ENCODE measurements at regions of chr6 and their contacts with region 1.

Region 1: GRCh38 chr6:159217595-159218275 is 48.5 kb downstream of the FNDC1 start:
- DNase-seq: peak; percentile 93
- H3K4me3 ChIP-seq: peak overlapping the region; percentile 60
- H3K27ac ChIP-seq: peak overlapping the region; percentile 87
- H3K4me1 ChIP-seq: peaks cover 77% of the 10 kb centered on the region
- CTCF ChIP-seq: peak; percentile 90

Region 2: GRCh38 chr6:158999666-159000403 is 217.9 kb before region 1 on chr6 and contains the start of gene RSPH3:
- CTCF ChIA-PET with region 1: no interaction called
- POLR2A ChIA-PET with region 1: no interaction called
- intact Hi-C with region 1: no loop called
- DNase-seq: peak; percentile 95
- H3K4me3 ChIP-seq: peak within 1 kb of the TSS; percentile 75
- H3K27ac ChIP-seq: peak within 1 kb of the TSS; percentile 65
- H3K4me1 ChIP-seq: peaks cover 17% of the 10 kb centered on the region
- CTCF ChIP-seq: peak; percentile 44; the same call in 1 of the 2 replicates
- total RNA-seq, gene RSPH3: 2.7 TPM in 2 replicates

Region 3: DNA sequence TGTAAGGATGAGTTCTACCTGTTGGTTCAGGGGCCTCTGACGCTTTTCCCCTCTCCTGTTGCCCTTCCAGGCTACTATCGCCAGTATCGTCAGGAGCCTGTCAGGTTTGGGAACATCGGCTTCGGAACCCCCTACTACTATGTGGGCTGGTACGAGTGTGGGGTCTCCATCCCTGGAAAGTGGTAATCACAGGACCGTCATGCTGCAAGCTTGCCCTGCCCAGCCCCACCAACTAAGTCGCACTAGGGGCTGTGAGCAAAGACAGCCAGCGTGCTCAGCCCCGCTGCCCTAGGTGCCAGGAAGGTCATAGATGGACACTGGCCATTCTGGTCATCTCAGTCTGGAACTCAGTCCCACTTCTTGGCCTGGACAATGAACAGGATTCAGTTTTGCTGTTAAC is 53.5 kb after region 1 on chr6:
- CTCF ChIA-PET with region 1: no interaction called
- POLR2A ChIA-PET with region 1: no interaction called
- intact Hi-C with region 1: no loop called
- DNase-seq: no peak
- H3K4me3 ChIP-seq: no peak overlapping the region
- H3K27ac ChIP-seq: no peak overlapping the region
- H3K4me1 ChIP-seq: no peaks in the 10 kb centered on the region
- CTCF ChIP-seq: no peak

Region 4: DNA sequence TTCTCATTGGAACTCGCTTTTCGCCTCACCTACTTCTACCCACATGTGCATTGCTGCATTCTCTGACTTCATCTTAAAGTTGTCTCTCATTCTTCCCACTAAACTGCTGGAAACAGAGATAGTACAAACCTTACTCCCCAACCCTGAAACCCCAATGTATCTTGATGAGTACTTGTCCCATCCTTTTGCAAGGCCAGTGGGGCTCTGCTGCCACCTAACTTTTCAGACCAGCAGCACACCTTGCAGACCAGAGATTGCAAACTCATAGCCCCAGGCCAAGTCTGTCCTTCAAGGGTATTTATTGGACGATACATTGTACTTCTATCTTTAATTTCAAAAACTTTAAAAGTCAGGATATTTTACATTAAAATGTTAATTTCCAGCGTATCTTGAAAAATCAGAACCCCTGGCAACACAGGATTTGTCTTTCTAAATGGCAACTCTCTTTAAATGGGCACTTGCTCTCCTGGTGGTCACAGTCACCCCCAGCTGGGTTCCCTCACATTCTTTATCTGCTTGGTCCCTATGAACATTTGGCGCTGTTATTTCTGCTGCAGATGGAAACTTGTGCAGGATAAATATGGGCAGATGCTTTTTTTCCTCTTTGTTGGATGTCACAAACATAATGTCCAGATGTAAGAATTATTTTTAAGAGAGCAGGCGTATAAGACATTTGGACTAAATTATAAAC is 391.4 kb after region 1 on chr6:
- CTCF ChIA-PET with region 1: interaction called, 8 read pairs
- POLR2A ChIA-PET with region 1: interaction called, 3 read pairs
- intact Hi-C with region 1: loop called (anchors 1 kb)
- DNase-seq: peak; percentile 66
- H3K4me3 ChIP-seq: no peak overlapping the region
- H3K27ac ChIP-seq: no peak overlapping the region
- H3K4me1 ChIP-seq: no peaks in the 10 kb centered on the region
- CTCF ChIP-seq: peak; percentile 93

Measured in OCI-LY7 (cell line).